CD8-positive, alpha-beta memory T cell (primary cell): ENCODE measurements at regions of chr4 and their contacts with region 1.

Region 1: GRCh38 chr4:152176627-152177214 is 359.2 kb downstream of the FBXW7 start:
- DNase-seq: no peak
- H3K4me3 ChIP-seq: no peak overlapping the region
- H3K4me3 Mint-ChIP-seq: no peak overlapping the region
- H3K27ac ChIP-seq: no peak overlapping the region
- H3K27ac Mint-ChIP-seq: peak overlapping the region in 1 of 8 donors; percentile 24
- H3K4me1 ChIP-seq: no peaks in the 10 kb centered on the region
- H3K4me1 Mint-ChIP-seq: no peaks in the 10 kb centered on the region
- H3K27me3 ChIP-seq: no peaks in the 10 kb centered on the region
- H3K27me3 Mint-ChIP-seq: peaks cover 0 to 4% of the 10 kb centered on the region in 2 donors

Region 2: DNA sequence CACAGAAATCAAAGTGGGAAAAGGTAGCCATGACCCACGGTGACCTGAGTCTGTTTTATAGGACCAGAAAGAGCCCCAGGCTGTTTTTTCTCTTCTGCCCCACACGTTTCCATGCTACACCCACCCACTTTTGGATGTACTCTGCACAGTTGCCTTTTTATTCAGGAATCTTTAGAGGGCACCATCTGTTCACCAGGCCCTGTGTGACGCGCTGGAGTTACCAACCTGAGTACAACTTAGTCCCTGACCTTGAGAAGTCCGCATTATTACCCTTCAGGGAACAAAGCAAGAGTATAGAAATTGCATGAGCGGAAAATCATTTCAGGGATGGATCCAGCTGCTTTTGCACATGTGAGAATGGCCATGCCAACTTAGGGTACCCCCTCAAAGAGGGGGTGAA is 208.1 kb before region 1 on chr4:
- CTCF ChIA-PET with region 1: no interaction called
- POLR2A ChIA-PET with region 1: interaction called, 10 read pairs
- DNase-seq: no peak
- H3K4me3 ChIP-seq: no peak overlapping the region
- H3K4me3 Mint-ChIP-seq: no peak overlapping the region
- H3K27ac ChIP-seq: no peak overlapping the region
- H3K27ac Mint-ChIP-seq: peak overlapping the region in 1 of 8 donors; percentile 32
- H3K4me1 ChIP-seq: no peaks in the 10 kb centered on the region
- H3K4me1 Mint-ChIP-seq: no peaks in the 10 kb centered on the region
- H3K27me3 ChIP-seq: no peaks in the 10 kb centered on the region
- H3K27me3 Mint-ChIP-seq: peaks cover 0 to 2% of the 10 kb centered on the region in 2 donors

Region 3: GRCh38 chr4:152154433-152154832 is 22.3 kb before region 1 on chr4:
- CTCF ChIA-PET with region 1: no interaction called
- POLR2A ChIA-PET with region 1: no interaction called
- DNase-seq: no peak
- H3K4me3 ChIP-seq: no peak overlapping the region
- H3K4me3 Mint-ChIP-seq: no peak overlapping the region
- H3K27ac ChIP-seq: no peak overlapping the region
- H3K27ac Mint-ChIP-seq: peak overlapping the region in 1 of 8 donors; percentile 10
- H3K4me1 ChIP-seq: no peaks in the 10 kb centered on the region
- H3K4me1 Mint-ChIP-seq: peaks cover 24 to 49% (median 34%) of the 10 kb centered on the region in 3 donors
- H3K27me3 ChIP-seq: no peaks in the 10 kb centered on the region
- H3K27me3 Mint-ChIP-seq: peaks cover 0 to 6% of the 10 kb centered on the region in 2 donors

Region 4: DNA sequence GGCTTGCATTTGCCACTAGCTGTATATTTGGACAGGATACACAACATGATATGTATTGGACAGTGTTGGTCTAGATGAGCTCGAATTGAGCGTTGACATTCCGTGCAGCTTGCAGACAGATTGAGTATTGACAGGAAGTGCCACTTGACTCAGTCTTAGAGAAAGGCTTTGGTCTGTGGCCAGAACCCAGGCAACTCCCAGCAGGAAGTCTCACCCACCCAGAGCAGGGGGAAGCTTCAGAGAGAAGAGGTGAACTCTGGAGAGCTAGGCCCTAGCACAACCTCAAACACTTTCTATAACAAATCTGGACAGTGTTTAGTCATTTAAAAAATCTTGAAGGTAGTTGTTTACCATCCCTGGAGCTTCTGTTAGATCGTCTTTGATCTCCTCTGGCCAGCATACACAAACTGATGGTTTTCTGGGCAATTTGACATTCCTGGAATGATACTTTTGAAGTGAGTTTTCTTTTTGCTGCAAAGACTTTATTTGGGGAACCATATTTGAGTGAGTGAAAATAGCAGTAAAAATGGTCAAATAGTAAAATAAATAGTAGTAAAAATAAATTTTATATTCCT is 78.8 kb after region 1 on chr4:
- CTCF ChIA-PET with region 1: no interaction called
- POLR2A ChIA-PET with region 1: no interaction called
- DNase-seq: peak; percentile 24 to 79 (median 63)
- H3K4me3 ChIP-seq: no peak overlapping the region
- H3K4me3 Mint-ChIP-seq: no peak overlapping the region
- H3K27ac ChIP-seq: no peak overlapping the region
- H3K27ac Mint-ChIP-seq: no peak overlapping the region
- H3K4me1 ChIP-seq: peaks cover 50% of the 10 kb centered on the region
- H3K4me1 Mint-ChIP-seq: peaks cover 7 to 28% (median 9%) of the 10 kb centered on the region in 3 donors
- H3K27me3 ChIP-seq: no peaks in the 10 kb centered on the region
- H3K27me3 Mint-ChIP-seq: no peaks in the 10 kb centered on the region

Region 5: DNA sequence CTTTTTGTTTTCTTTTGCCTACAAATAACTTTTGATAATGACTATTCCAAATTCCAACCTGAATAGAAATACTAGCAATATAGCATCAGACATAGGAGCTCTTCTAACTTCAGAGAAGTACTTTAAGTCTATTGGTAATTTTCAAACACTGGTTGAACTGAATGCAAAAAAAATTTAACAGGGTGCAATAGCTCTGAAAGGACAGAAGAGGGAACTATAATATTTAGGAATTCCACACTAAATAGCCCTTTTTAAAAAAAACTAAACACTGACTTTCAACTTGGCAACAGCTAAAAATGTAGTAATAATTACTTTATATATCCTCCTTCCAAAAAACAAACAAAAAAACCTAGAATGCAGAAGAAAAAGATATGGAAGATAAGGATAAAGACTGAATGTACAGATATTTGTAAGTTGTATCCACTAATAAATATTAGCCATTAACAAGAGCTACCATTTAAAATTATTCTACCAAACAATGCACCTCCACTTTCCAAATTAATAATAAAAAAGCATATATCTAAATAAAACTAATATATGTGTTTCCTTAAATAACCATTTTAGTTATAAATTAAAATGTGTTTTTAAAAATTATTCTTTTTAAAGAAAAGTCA is 277.8 kb after region 1 on chr4:
- CTCF ChIA-PET with region 1: no interaction called
- POLR2A ChIA-PET with region 1: no interaction called
- DNase-seq: no peak
- H3K4me3 ChIP-seq: no peak overlapping the region
- H3K4me3 Mint-ChIP-seq: no peak overlapping the region
- H3K27ac ChIP-seq: no peak overlapping the region
- H3K27ac Mint-ChIP-seq: peak overlapping the region in 2 of 8 donors; percentile 60 to 79
- H3K4me1 ChIP-seq: peaks cover 12% of the 10 kb centered on the region
- H3K4me1 Mint-ChIP-seq: peaks cover 44 to 54% (median 51%) of the 10 kb centered on the region in 3 donors
- H3K27me3 ChIP-seq: no peaks in the 10 kb centered on the region
- H3K27me3 Mint-ChIP-seq: no peaks in the 10 kb centered on the region